ENCODE measurements at regions of chr1 and their contacts with region 1.

Region 1: GRCh38 chr1:202810615-202811295 is at the start of gene PCAT6:
- DNase-seq: peak; percentile 90
- H3K4me3 Mint-ChIP-seq: peak within 1 kb of the TSS; percentile 74
- H3K27ac Mint-ChIP-seq: no peak within 1 kb of the TSS
- H3K4me1 Mint-ChIP-seq: peaks cover 31% of the 10 kb centered on the region
- H3K27me3 Mint-ChIP-seq: no peaks in the 10 kb centered on the region
- total RNA-seq, gene PCAT6: 0.37 to 0.43 TPM

Region 2: DNA sequence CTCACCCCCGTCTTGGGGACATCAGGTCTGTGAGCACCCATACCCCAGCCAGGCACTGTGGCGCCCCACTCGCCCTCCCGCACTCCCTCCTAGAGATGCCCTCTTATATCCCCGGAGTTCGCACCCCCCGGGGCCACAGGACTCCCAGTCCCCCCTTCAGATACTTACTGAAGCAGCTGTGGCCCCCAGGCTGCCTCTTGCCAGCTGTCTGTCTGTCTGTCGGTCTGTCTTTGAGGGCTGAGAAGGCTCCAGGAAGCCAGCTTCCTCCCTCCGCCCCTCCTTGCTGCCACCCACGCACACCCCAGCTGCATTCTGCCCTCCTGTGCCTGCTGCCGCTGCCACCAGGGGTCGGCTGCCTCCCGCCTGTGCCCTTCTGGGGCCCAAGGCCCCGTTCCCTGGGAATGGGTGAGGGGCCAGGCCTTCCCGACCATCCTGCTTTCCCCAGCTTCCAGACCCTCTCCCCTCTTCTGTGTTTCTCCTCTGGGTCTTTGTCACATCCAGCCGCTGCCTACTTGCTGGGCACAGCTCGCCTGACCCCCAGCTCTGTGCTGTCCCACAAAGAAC is 650.3 kb before region 1 on chr1 and contains the start of gene PTPN7:
- CTCF ChIA-PET with region 1: no interaction called
- intact Hi-C with region 1: loop called (anchors 5 kb)
- DNase-seq: peak; percentile 96
- H3K4me3 Mint-ChIP-seq: peak within 1 kb of the TSS; percentile 99
- H3K27ac Mint-ChIP-seq: peak within 1 kb of the TSS; percentile 100
- H3K4me1 Mint-ChIP-seq: peaks cover 80% of the 10 kb centered on the region
- H3K27me3 Mint-ChIP-seq: no peaks in the 10 kb centered on the region
- total RNA-seq, gene PTPN7: 112 to 119 TPM

Region 3: GRCh38 chr1:202788800-202789199 is 22.0 kb before region 1 on chr1:
- CTCF ChIA-PET with region 1: no interaction called
- intact Hi-C with region 1: no loop called
- DNase-seq: no peak
- H3K4me3 Mint-ChIP-seq: no peak overlapping the region
- H3K27ac Mint-ChIP-seq: no peak overlapping the region
- H3K4me1 Mint-ChIP-seq: peaks cover 15% of the 10 kb centered on the region
- H3K27me3 Mint-ChIP-seq: no peaks in the 10 kb centered on the region

Region 4: GRCh38 chr1:202888531-202889360 is 78.0 kb after region 1 on chr1 and contains the start of gene RABIF:
- CTCF ChIA-PET with region 1: no interaction called
- intact Hi-C with region 1: loop called (anchors 1 kb)
- DNase-seq: peak; percentile 97
- H3K4me3 Mint-ChIP-seq: peak within 1 kb of the TSS; percentile 94
- H3K27ac Mint-ChIP-seq: peak within 1 kb of the TSS; percentile 96
- H3K4me1 Mint-ChIP-seq: peaks cover 24% of the 10 kb centered on the region
- H3K27me3 Mint-ChIP-seq: no peaks in the 10 kb centered on the region
- total RNA-seq, gene RABIF: 5.9 to 6.2 TPM

Region 5: DNA sequence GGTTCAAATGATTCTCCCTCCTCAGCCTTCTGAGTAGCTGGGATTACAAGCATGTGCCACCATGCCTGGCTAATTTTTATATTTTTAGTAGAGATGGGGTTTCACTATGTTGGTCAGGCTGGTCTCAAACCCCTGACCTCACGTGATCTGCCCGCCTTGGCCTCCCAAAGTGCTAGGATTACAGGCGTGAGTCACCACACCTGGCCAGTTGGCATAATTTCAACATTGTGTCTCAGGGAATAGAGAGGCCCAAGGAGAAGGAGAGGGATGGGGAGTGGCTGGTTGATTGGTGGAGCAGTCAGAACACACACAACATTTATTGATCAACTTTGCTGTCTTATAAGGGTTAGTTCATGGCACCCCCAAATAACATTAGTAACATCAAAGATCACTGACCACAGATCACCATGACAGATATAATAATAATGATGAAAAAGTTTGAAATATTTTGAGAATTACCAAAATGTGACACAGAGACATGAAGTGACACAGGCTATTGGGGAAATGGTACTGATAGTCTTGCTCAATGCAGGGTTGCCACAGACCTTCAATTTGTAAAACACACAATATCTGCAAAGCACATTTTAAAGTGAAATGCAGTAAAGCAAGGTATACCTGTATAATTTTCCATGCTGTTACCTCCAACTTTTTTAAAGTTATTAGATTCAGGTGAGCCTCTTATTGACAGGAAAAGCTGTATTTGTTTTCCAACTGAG is 172.1 kb after region 1 on chr1:
- CTCF ChIA-PET with region 1: no interaction called
- intact Hi-C with region 1: no loop called
- DNase-seq: no peak
- H3K4me3 Mint-ChIP-seq: no peak overlapping the region
- H3K27ac Mint-ChIP-seq: no peak overlapping the region
- H3K4me1 Mint-ChIP-seq: no peaks in the 10 kb centered on the region
- H3K27me3 Mint-ChIP-seq: no peaks in the 10 kb centered on the region

Region 6: GRCh38 chr1:203006948-203007871 is 196.5 kb after region 1 on chr1 and contains the start of gene TMEM183A:
- CTCF ChIA-PET with region 1: no interaction called
- intact Hi-C with region 1: loop called (anchors 1 kb)
- DNase-seq: peak; percentile 98
- H3K4me3 Mint-ChIP-seq: peak within 1 kb of the TSS; percentile 79
- H3K27ac Mint-ChIP-seq: peak within 1 kb of the TSS; percentile 93
- H3K4me1 Mint-ChIP-seq: peaks cover 27% of the 10 kb centered on the region
- H3K27me3 Mint-ChIP-seq: no peaks in the 10 kb centered on the region
- total RNA-seq, gene TMEM183A: 80.3 to 90.6 TPM

Region 7: DNA sequence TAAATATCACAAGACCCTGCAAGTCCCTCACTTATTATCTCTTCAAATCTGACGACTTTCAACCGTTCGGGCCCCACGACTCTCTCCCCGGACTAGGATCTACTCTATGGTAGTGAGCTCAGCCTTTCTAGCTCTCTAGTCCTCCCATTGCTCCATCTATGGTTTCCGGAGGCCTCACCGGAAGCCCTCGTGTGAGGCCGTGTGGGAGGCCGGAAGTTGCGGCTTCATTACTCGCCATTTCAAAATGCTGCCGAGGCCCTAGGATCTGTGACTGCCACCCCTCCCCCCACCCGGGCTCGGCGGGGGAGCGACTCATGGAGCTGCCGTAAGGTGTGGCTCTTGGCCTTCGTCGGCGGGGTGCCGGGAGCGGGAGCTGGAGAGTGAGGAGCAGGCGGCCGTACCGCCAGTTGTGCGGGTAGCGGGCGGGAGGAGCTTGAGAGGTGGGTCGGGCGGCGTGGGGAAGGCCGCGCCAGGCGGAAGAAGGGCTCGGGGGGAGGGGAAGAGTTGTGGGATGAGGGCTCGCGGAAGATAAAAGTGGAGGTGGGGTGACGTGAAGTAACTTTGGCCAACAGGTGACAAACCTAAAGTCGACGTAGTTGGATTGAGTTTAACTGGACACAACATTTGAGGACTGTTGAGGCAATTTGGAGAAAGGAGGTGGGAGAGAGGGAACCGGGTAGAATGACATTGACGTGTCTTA is 1705.6 kb after region 1 on chr1 and contains the start of gene MDM4:
- CTCF ChIA-PET with region 1: no interaction called
- intact Hi-C with region 1: loop called (anchors 10 kb)
- DNase-seq: peak; percentile 97
- H3K4me3 Mint-ChIP-seq: no peak within 1 kb of the TSS
- H3K27ac Mint-ChIP-seq: peak within 1 kb of the TSS; percentile 72
- H3K4me1 Mint-ChIP-seq: peaks cover 59% of the 10 kb centered on the region
- H3K27me3 Mint-ChIP-seq: no peaks in the 10 kb centered on the region
- total RNA-seq, gene MDM4: 109 TPM

Measured in activated naive CD4-positive, alpha-beta T cell treated with anti-CD3 and anti-CD28 coated beads for 36 hours (primary cell).